ENCODE measurements at regions of chr9 and their contacts with region 1.

Region 1: DNA sequence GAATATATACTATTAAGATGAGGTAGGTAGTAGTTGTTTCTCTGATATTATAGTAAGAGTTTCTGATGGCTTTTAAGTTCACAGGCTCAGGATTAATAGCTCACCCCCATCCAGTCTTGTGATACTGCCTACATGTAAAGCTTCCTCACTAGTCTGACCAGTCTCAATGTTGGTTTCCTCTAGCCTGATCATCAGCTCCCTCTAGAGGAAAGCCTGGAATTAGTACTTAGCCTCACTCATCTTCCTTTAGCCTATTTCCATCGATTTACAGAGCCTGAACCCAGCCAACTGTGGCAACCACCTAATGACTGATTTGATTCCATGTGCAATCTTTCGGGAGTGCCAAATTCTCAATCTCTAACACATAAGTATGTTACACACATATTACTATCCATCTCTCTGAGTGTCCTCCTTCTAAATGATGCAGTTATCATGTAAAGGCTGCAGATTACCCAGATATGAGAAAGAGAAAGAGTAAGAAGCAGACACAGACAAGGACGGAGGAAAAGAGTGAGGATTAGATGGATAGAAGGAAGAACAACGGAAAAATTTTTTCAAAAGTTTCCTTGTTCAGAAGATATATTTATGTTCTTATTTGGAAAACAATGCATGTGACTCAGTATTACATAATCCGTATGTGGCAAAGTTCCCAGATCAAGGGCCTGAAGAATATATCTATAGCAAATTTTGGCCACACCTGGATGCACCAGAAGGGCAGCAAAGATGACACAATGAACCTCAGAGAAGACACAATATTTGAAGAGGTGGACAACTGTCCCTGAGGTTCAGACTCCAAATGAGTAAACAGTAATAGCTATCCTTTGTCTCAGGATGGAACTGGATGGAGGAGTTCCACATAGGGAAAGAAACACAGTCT is 333.7 kb downstream of the ELAVL2 start:
- DNase-seq: no peak
- ATAC-seq: peak in 2 of 8 donors; percentile 60 to 61
- H3K4me3 ChIP-seq: no peak overlapping the region
- H3K27ac ChIP-seq: no peak overlapping the region
- H3K4me1 ChIP-seq: peaks cover 0 to 5% (median 0%) of the 10 kb centered on the region in 9 donors
- H3K27me3 ChIP-seq: no peaks in the 10 kb centered on the region
- CTCF ChIP-seq: peak in 7 of 9 donors; percentile 43 to 65 (median 56)

Region 2: DNA sequence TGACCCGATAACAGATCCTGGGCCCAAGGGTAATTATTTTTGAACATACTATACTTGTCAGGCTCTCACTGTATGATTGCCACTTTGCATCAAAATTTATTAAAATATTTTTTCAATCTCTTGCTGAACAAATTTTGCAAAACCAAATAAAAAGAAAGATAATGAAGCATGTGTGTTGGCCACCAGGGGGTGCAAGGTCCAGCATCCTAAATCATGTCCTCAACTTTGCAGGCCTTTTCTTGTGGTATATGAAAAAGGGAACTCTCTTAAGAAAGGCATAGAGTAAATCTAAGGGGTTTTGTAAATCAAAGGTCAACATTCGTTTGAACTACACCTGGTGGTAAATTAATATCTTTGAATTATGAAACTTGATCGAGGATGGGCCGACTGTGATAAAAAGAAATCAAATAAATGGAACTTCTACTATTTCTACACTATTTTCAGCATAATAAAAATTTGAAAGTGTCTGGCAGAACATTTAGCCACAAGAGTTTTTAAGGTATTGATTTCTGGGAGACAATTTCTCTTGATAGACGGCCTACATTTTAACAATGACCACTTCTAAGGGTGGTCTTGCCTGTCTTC is 369.2 kb before region 1 on chr9:
- intact Hi-C with region 1: loop called in 5 of 10 experiments (anchors 5 to 10 kb)
- DNase-seq: no peak
- ATAC-seq: no peak
- H3K4me3 ChIP-seq: no peak overlapping the region
- H3K27ac ChIP-seq: no peak overlapping the region
- H3K4me1 ChIP-seq: no peaks in the 10 kb centered on the region
- H3K27me3 ChIP-seq: no peaks in the 10 kb centered on the region
- CTCF ChIP-seq: peak in 8 of 9 donors; percentile 27 to 68 (median 58)

Region 3: DNA sequence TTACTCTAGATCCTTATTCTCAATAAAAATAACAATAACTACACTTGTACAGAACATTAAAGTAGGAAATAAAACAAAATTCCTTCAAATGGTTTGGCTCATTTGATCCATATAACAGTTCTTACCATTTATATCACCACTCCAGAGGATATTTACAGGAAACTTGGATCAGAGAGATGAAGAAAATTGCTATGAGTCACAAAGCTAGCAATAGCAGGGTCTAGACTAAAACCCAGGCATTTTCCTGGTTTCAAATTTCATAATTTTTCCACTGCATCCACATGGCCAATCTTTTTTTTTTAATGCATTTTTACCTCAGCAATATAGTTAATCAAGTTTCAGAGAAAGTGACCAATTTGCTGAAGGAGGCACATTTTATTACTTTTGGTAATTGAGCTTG is 34.4 kb after region 1 on chr9:
- intact Hi-C with region 1: no loop called
- DNase-seq: no peak
- ATAC-seq: no peak
- H3K4me3 ChIP-seq: no peak overlapping the region
- H3K27ac ChIP-seq: no peak overlapping the region
- H3K4me1 ChIP-seq: peaks cover 0 to 19% (median 0%) of the 10 kb centered on the region in 9 donors
- H3K27me3 ChIP-seq: no peaks in the 10 kb centered on the region
- CTCF ChIP-seq: no peak

Region 4: DNA sequence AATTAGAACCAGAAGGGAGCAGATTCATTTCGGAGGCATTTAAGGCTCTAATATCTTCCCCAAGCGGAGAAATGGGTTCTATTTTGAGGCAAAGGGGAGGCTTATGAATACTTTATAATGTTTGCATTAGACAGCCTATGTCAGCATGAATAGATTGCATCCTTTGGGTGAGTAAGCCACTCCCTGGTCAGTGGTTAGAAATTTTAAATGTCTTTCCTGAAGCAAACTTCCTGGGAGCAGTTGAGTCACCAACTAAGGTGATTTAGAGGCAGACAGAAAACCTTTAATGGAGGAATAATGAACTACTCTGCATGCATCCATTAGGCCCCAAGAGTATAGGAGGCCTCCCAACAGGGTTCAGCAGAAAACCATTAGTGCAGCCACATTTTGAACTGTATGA is 128.8 kb after region 1 on chr9:
- intact Hi-C with region 1: loop called in 1 of 10 experiments (anchors 10 kb)
- DNase-seq: no peak
- ATAC-seq: no peak
- H3K4me3 ChIP-seq: no peak overlapping the region
- H3K27ac ChIP-seq: peak overlapping the region in 4 of 10 donors; percentile 21 to 72 (median 62)
- H3K4me1 ChIP-seq: peaks cover 0 to 9% (median 0%) of the 10 kb centered on the region in 9 donors
- H3K27me3 ChIP-seq: no peaks in the 10 kb centered on the region
- CTCF ChIP-seq: no peak

Measured in heart right ventricle (tissue), 16 donors.